Aorta (tissue), 5 donors: ENCODE measurements at regions of chr2 and their contacts with region 1.

Region 1: DNA sequence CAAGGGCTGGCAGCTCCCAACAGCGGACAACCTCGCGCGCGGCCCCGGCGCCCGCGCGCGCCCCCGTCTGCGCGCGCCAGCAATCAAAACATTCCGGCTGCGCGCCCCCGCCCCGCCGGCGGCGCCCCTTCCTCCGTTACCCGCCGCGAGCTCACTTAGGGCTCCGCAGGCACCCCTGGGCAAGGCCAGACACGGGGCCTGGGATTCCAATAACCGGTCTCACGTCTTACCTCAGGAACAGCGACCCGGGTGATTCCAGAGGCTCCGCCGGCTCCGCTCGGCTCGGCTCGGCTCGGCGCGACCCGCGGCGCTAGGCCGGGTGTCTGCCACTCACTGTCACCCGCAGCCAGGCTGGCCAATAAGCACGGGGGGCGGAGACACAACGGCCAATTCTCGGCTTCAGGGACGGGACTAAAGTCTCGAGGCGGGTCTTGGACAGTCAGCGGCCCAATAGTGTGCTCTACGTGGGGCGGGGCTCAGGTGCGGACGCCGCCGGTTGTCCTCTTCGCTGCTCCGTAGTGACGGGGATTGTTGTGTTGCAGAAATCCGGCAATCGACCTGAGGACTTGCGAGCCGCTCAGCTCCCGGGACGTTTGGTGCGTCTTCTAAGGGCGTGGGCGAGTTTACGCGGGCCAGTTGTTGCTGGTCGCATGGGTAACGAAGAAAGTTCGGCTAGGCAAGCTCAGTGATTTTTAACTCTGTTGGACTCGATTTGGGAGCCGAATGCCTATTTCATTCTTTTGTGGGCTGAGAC is at the starts of genes ANKZF1 and ATG9A:
- DNase-seq: peak; percentile 99
- ATAC-seq: peak; percentile 99
- H3K4me3 ChIP-seq: peak within 1 kb of the TSS; percentile 67 to 82
- H3K27ac ChIP-seq: peak within 1 kb of the TSS; percentile 15 to 90
- H3K4me1 ChIP-seq: peaks cover 0 to 4% of the 10 kb centered on the region in 2 donors
- H3K27me3 ChIP-seq: no peaks in the 10 kb centered on the region
- total RNA-seq, gene ANKZF1: 21.4 to 55.9 TPM
- total RNA-seq, gene ATG9A: 33.9 to 36.3 TPM

Region 2: GRCh38 chr2:218995972-218996711 is 233.3 kb before region 1 on chr2:
- intact Hi-C with region 1: no loop called
- DNase-seq: peak; percentile 87 to 96
- ATAC-seq: peak; percentile 87
- H3K4me3 ChIP-seq: no peak overlapping the region
- H3K27ac ChIP-seq: no peak overlapping the region
- H3K4me1 ChIP-seq: no peaks in the 10 kb centered on the region
- H3K27me3 ChIP-seq: no peaks in the 10 kb centered on the region

Region 3: DNA sequence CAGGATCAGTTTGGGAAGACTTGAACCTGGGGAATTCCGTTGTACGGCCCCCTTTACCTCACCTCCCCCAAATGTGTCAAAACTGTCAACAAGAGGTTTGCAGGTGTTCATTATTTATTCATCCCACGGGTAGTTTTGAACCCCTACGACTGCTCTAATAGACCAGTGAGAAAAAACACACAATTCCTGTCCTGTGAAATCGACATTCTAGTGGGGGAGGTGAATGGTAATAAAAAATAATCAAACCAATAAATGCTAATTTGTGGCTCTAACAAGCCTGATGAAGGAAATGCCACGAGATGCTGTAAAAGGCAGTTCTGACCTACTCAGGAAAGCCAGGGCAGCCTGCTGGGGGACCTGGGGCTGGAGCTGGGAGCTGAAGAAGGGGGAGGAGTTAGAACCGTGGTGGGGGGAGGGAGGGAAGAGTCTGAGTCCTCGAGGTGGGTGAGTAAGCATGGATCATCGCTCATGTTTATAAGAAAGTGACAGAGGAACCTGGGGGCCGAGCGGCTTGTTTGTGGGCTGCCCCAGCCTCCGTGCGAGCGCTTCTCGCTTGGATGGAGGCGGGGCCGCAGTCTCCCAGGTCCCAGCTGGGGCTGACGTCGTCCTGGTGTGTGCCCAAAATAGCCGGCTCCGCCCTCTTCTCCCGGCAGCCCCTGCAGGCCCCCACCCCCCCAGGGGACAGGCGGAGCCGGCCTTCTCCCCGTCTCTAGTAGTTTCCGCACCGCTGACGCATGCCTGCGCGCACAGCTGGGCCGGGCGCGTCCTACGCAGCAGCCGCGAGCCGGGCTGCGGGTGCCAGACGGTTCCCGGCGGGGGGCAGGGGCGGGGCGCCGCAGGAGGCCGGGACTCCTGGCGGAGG is 49.4 kb after region 1 on chr2 and contains the start of gene DNAJB2:
- intact Hi-C with region 1: loop called in 1 of 2 experiments (anchors 1 kb)
- DNase-seq: peak; percentile 100
- ATAC-seq: peak; percentile 97
- H3K4me3 ChIP-seq: peak within 1 kb of the TSS; percentile 45 to 46
- H3K27ac ChIP-seq: peak within 1 kb of the TSS; percentile 53 to 76
- H3K4me1 ChIP-seq: peaks cover 0 to 4% of the 10 kb centered on the region in 2 donors
- H3K27me3 ChIP-seq: no peaks in the 10 kb centered on the region
- total RNA-seq, gene DNAJB2: 54.4 to 54.7 TPM